PC-3 (cell line): ENCODE measurements at regions of chr11 and their contacts with region 1.

Region 1: GRCh38 chr11:17790453-17790852 is 55.9 kb downstream of the KCNC1 start:
- DNase-seq: peak; percentile 77
- ATAC-seq: peak; percentile 67
- H3K4me3 ChIP-seq: no peak overlapping the region
- H3K27ac ChIP-seq: peak overlapping the region; percentile 65
- H3K4me1 ChIP-seq: peaks cover 30% of the 10 kb centered on the region
- H3K27me3 ChIP-seq: no peaks in the 10 kb centered on the region
- CTCF ChIP-seq: no peak

Region 2: GRCh38 chr11:17610085-17610894 is 180.2 kb before region 1 on chr11:
- CTCF ChIA-PET with region 1: no interaction called
- POLR2A ChIA-PET with region 1: no interaction called
- intact Hi-C with region 1: no loop called
- DNase-seq: no peak
- ATAC-seq: no peak
- H3K4me3 ChIP-seq: no peak overlapping the region
- H3K27ac ChIP-seq: no peak overlapping the region
- H3K4me1 ChIP-seq: no peaks in the 10 kb centered on the region
- H3K27me3 ChIP-seq: peaks cover 27% of the 10 kb centered on the region
- CTCF ChIP-seq: no peak

Region 3: DNA sequence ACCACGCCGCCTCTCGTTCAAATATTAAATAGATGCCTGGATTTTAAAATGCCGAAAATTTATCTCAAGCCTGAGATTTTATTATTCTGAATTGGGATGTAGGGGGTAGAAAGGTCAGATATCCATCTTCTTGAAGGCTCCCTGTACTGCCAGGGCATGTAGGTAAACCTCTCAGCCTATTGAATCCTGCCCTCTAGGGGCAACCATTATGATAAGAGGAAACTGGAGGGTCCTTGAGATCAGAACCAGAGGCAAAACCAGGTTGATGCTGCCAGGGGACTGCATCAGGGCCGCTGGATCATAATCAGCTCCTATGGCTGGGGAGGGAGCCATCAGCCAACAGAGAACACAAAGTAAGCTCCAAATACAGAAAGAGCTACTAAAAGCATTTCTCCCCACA is 36.6 kb after region 1 on chr11:
- CTCF ChIA-PET with region 1: no interaction called
- POLR2A ChIA-PET with region 1: no interaction called
- intact Hi-C with region 1: no loop called
- DNase-seq: peak; percentile 41
- ATAC-seq: no peak
- H3K4me3 ChIP-seq: no peak overlapping the region
- H3K27ac ChIP-seq: no peak overlapping the region
- H3K4me1 ChIP-seq: no peaks in the 10 kb centered on the region
- H3K27me3 ChIP-seq: no peaks in the 10 kb centered on the region
- CTCF ChIP-seq: peak; percentile 57

Region 4: DNA sequence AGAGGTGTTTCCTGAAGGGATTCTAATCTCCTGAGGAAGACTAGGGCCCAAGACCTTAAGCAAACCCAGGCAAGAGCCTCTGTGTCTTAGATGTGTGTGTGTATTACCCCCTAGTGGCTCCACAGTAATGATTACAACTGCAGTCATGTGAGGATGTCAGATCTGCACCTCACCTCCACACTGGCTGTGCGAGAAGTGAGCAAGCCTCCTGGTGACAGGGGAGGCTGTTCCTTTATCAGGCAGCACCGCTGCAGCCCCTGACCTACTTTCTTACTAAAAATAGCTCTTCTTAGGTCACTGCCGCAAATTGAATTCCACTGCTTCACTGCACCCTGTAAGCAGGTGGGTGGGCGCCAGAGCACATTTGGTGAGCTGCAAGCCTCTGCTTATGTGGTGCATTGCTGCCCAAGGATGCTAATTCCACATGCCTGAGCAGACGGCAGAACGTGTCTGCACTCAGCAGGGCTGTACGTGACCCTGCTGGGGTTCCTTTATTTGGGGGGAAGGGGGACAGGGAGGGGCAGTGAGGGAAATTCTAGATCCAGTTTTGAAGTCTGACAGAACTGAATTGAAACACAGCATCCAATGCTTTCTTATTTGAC is 56.5 kb after region 1 on chr11:
- CTCF ChIA-PET with region 1: no interaction called
- POLR2A ChIA-PET with region 1: no interaction called
- intact Hi-C with region 1: loop called (anchors 5 kb)
- DNase-seq: peak; percentile 53
- ATAC-seq: peak; percentile 59
- H3K4me3 ChIP-seq: no peak overlapping the region
- H3K27ac ChIP-seq: peak overlapping the region; percentile 97
- H3K4me1 ChIP-seq: peaks cover 31% of the 10 kb centered on the region
- H3K27me3 ChIP-seq: no peaks in the 10 kb centered on the region
- CTCF ChIP-seq: peak; percentile 64